ENCODE measurements at regions of chr19 and their contacts with region 1.

Region 1: GRCh38 chr19:36837906-36838783 is at the start of gene ZNF790:
- DNase-seq: peak; percentile 89
- H3K4me3 Mint-ChIP-seq: no peak within 1 kb of the TSS
- H3K27ac Mint-ChIP-seq: no peak within 1 kb of the TSS
- H3K4me1 Mint-ChIP-seq: no peaks in the 10 kb centered on the region
- H3K27me3 Mint-ChIP-seq: no peaks in the 10 kb centered on the region
- CTCF ChIP-seq: no peak
- total RNA-seq, gene ZNF790: 10.4 and 10.8 TPM in 2 replicates

Region 2: DNA sequence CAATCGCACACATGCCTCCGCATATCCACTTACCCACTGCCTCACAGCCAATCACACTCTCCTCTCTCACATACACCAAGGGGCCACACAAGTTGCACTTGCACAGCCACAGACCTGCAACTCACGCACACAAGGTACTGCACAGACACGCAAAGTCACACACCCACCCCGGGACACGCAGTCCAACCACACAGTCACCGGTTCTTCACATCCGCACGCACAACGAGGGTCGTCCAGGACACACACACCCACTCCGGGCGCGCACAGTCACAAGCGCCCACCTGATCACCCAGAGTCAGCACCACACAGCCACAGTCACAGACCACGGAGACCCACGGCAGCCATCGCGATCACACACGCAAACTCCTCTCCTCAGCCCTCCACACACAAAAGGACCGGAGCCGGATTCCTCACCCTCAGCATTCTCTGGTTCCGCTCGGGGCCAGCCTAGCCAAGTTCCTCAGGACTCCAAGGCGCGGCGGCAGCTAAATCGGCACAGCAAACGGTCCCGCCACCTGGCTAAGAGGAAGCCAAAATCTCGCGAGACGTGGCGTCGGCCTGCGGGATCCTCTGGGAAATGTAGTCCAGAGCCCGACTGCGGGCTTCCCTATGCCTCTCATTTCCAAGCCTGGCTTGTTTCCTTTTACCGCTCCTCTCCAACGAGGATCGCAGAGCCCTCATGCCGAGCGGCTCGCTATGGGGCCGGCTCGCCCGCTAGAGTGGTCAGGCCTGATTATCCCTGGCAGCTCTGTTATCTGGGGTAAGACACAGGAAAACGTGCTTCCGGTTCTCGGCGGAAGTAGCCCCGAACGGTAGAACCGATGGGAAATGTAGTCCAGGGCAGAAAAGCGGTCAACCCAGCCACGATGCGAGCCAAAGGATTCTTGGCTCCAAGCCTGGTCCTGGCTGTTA is 65.6 kb before region 1 on chr19 and contains the start of gene ZNF850:
- CTCF ChIA-PET with region 1: no interaction called
- intact Hi-C with region 1: loop called (anchors 5 kb)
- DNase-seq: peak; percentile 95
- H3K4me3 Mint-ChIP-seq: peak within 1 kb of the TSS; percentile 91
- H3K27ac Mint-ChIP-seq: peak within 1 kb of the TSS; percentile 76
- H3K4me1 Mint-ChIP-seq: peaks cover 20% of the 10 kb centered on the region
- H3K27me3 Mint-ChIP-seq: no peaks in the 10 kb centered on the region
- CTCF ChIP-seq: no peak
- total RNA-seq, gene ZNF850: 9.0 and 10.9 TPM in 2 replicates

Region 3: DNA sequence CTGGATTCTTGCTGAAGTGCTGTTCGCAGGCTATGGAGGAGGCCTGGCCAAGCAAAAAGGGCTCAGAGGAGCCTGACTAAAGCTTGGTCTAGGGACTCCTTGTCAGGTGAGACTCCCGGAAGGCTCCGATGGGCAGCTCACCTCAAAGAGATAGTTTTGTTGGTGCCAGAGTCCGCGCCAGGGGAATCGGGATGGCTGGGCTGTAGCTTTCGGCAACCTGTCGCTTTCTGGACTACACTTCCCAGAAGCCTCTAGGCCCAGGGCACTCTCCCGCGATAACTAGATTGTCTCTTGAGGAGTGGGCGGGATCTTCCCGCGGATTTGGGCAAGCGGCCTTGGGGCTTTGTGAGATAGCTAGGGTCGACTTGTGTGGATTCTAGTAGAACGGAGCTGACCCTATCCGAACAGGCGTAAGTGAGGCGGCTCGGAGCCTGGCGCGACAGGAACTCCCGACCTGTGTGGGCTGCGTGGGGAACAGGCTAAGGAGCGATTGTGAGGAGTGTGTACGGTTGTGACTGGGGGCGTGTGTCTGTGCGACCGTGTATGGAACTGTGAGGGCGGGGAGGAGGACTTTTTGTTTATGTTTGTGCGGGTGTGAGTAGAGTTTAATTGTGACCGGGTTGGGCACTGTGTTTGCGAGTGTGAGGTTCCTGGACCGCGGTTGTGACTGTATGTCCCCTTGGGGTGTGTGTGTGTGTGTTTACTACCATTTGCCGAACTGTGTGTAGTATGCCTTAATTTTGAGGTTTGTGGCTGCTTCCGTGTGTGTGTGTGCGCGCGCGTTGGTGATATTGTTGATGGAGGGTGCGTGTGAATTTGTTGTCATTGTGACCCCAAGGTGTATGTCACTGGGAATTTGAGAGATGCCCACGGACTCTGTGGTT is 12.7 kb after region 1 on chr19 and contains the start of gene ZNF345:
- CTCF ChIA-PET with region 1: interaction called, 11 read pairs
- intact Hi-C with region 1: loop called (anchors 1 kb)
- DNase-seq: peak; percentile 86
- H3K4me3 Mint-ChIP-seq: no peak within 1 kb of the TSS
- H3K27ac Mint-ChIP-seq: no peak within 1 kb of the TSS
- H3K4me1 Mint-ChIP-seq: no peaks in the 10 kb centered on the region
- H3K27me3 Mint-ChIP-seq: no peaks in the 10 kb centered on the region
- CTCF ChIP-seq: no peak
- total RNA-seq, gene ZNF345: 5.0 and 5.3 TPM in 2 replicates

Measured in Calu3 (cell line).